Sigmoid colon (tissue), 7 donors: ENCODE measurements at regions of chr1 and their contacts with region 1.

Region 1: GRCh38 chr1:201895913-201896807 is 7.5 kb downstream of the SHISA4 start:
- DNase-seq: peak; percentile 97
- H3K4me3 ChIP-seq: no peak overlapping the region
- H3K27ac ChIP-seq: peak overlapping the region; percentile 81 to 97 (median 88)
- H3K4me1 ChIP-seq: peaks cover 0 to 92% (median 66%) of the 10 kb centered on the region in 4 donors
- H3K27me3 ChIP-seq: no peaks in the 10 kb centered on the region
- CTCF ChIP-seq: peak; percentile 86 to 98 (median 97)
- EP300 ChIP-seq: peak in 1 of 4 donors; percentile 14
- POLR2A ChIP-seq: no peak

Region 2: GRCh38 chr1:201933840-201934430 is 37.8 kb after region 1 on chr1:
- intact Hi-C with region 1: no loop called
- DNase-seq: no peak
- H3K4me3 ChIP-seq: no peak overlapping the region
- H3K27ac ChIP-seq: peak overlapping the region; percentile 91 to 98 (median 92)
- H3K4me1 ChIP-seq: peaks cover 0 to 98% (median 80%) of the 10 kb centered on the region in 4 donors
- H3K27me3 ChIP-seq: no peaks in the 10 kb centered on the region
- CTCF ChIP-seq: no peak
- EP300 ChIP-seq: no peak
- POLR2A ChIP-seq: no peak

Region 3: DNA sequence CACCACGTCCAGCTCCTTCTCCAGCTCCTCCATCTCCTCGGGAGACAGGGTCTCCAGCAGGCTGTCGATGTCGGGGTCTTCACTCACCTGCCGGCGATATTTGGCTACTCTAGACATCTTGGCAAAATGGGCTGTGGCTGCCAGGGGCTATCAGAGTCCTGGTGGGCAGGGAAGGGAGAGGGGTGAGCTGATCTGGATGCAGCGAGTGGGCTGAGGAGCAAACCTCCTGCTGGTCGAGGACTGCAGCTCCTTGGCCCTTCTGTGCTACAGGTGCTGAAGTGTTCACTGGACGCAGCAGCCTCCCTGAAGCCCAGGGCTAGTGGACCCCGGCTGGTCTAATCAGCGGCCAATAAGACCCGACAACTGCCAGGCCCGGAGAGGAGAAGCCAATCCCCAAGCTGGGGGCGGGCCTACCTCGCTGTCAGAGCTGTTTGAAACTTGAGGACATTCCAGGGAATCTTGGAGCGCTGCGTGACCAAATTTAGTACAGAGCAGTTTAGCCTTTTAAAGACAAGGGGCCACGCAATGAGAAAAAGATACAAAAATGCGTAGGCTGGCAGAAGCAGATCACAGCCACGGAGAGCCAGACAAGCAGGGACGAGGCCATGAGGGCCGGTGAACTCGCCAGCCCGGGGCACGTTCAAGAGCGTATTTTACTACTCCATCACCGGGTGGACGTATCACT is 50.2 kb after region 1 on chr1 and contains the start of gene LMOD1:
- intact Hi-C with region 1: loop called (anchors 1 kb)
- DNase-seq: peak; percentile 99
- H3K4me3 ChIP-seq: peak within 1 kb of the TSS; percentile 73 to 82 (median 76)
- H3K27ac ChIP-seq: peak within 1 kb of the TSS; percentile 91 to 98 (median 92)
- H3K4me1 ChIP-seq: peaks cover 0 to 10% (median 8%) of the 10 kb centered on the region in 4 donors
- H3K27me3 ChIP-seq: no peaks in the 10 kb centered on the region
- CTCF ChIP-seq: peak in 2 of 4 experiments; percentile 13 to 23
- EP300 ChIP-seq: peak in 1 of 4 donors; percentile 42
- POLR2A ChIP-seq: peak; percentile 89 to 97
- total RNA-seq, gene LMOD1: 633 to 1,011 (median 785) TPM

Region 4: GRCh38 chr1:201970334-201971159 is 74.4 kb after region 1 on chr1:
- intact Hi-C with region 1: loop called (anchors 1 kb)
- DNase-seq: no peak
- H3K4me3 ChIP-seq: no peak overlapping the region
- H3K27ac ChIP-seq: no peak overlapping the region
- H3K4me1 ChIP-seq: peaks cover 0 to 5% (median 2%) of the 10 kb centered on the region in 4 donors
- H3K27me3 ChIP-seq: no peaks in the 10 kb centered on the region
- CTCF ChIP-seq: no peak
- EP300 ChIP-seq: no peak
- POLR2A ChIP-seq: no peak

Region 5: GRCh38 chr1:202046227-202046801 is 150.2 kb after region 1 on chr1:
- intact Hi-C with region 1: no loop called
- DNase-seq: no peak
- H3K4me3 ChIP-seq: no peak overlapping the region
- H3K27ac ChIP-seq: no peak overlapping the region
- H3K4me1 ChIP-seq: no peaks in the 10 kb centered on the region
- H3K27me3 ChIP-seq: no peaks in the 10 kb centered on the region
- CTCF ChIP-seq: no peak
- EP300 ChIP-seq: no peak
- POLR2A ChIP-seq: peak in 1 of 2 donors; percentile 24

Region 6: DNA sequence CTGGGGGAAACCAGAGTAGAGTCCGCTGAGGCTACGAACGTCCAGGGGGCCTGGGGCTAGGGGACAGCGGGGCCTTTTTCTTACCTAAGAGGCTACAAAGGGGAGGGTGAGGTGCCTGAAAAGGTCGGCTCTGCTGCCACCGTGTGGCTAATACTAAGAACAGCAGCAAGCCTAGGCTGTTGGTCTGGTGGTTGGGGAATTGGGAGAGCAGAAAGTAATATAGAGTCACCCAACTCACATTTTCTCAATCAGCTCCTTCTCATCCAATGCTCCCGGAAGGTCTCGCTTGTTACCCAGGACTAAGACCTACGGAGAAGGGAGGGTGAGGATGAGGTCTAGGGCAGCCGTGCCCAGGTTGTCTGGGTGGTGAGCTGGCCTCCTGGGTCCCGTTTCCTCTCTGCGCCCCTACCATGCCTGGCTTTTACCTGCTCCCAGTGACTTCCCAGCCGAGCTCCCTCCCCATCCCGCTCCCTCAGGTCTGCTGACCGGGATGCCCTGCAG is 239.1 kb after region 1 on chr1:
- intact Hi-C with region 1: loop called (anchors 10 kb)
- DNase-seq: peak; percentile 81
- H3K4me3 ChIP-seq: no peak overlapping the region
- H3K27ac ChIP-seq: peak overlapping the region; percentile 63 to 88 (median 84)
- H3K4me1 ChIP-seq: peaks cover 0 to 41% (median 28%) of the 10 kb centered on the region in 4 donors
- H3K27me3 ChIP-seq: no peaks in the 10 kb centered on the region
- CTCF ChIP-seq: peak; percentile 61 to 87 (median 80)
- EP300 ChIP-seq: no peak
- POLR2A ChIP-seq: no peak